Heart right ventricle (tissue), 16 donors: ENCODE measurements at regions of chr19 and their contacts with region 1.

Region 1: GRCh38 chr19:17947815-17948513 is 15.1 kb downstream of the CCDC124 start:
- DNase-seq: peak; percentile 90 to 94
- ATAC-seq: peak; percentile 84 to 93 (median 92)
- H3K4me3 ChIP-seq: peak overlapping the region; percentile 62 to 92 (median 74)
- H3K27ac ChIP-seq: peak overlapping the region in 6 of 10 donors; percentile 44 to 82 (median 61)
- H3K4me1 ChIP-seq: peaks cover 29 to 54% (median 48%) of the 10 kb centered on the region in 9 donors
- H3K27me3 ChIP-seq: peaks cover 17 to 50% (median 43%) of the 10 kb centered on the region in 7 donors
- CTCF ChIP-seq: no peak

Region 2: DNA sequence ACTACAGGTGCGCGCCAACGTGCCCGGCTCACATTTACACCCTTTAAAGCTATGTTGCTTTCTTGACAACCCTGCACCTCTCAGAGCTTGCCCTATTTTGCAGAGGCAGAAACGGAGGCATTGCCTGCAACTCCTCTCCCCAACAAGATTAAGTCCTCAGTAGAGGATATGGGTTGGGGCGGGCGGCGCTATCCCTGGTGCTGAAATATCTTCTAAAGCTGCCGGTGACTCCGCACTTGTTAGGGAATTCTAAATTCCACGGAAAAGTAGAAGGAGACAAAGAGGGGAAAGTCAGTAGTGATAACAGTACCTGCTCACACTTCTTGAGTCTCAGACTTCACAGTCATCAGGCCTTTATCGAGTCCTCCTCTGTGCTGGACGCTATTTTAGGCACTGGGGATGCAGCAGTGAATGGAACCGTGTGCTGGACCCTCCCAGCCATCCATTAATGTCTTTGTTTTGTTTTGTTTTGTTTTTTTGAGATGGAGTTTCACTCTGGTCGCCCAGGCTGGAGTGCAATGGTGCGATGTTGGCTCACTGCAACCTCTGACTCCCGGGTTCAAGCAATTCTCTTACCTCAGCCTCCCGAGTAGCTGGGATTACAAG is 58.3 kb before region 1 on chr19:
- intact Hi-C with region 1: no loop called
- DNase-seq: peak in 1 of 2 donors; percentile 13
- ATAC-seq: peak in 1 of 8 donors; percentile 47
- H3K4me3 ChIP-seq: no peak overlapping the region
- H3K27ac ChIP-seq: no peak overlapping the region
- H3K4me1 ChIP-seq: no peaks in the 10 kb centered on the region
- H3K27me3 ChIP-seq: peaks cover 0 to 46% (median 25%) of the 10 kb centered on the region in 7 donors
- CTCF ChIP-seq: no peak

Region 3: DNA sequence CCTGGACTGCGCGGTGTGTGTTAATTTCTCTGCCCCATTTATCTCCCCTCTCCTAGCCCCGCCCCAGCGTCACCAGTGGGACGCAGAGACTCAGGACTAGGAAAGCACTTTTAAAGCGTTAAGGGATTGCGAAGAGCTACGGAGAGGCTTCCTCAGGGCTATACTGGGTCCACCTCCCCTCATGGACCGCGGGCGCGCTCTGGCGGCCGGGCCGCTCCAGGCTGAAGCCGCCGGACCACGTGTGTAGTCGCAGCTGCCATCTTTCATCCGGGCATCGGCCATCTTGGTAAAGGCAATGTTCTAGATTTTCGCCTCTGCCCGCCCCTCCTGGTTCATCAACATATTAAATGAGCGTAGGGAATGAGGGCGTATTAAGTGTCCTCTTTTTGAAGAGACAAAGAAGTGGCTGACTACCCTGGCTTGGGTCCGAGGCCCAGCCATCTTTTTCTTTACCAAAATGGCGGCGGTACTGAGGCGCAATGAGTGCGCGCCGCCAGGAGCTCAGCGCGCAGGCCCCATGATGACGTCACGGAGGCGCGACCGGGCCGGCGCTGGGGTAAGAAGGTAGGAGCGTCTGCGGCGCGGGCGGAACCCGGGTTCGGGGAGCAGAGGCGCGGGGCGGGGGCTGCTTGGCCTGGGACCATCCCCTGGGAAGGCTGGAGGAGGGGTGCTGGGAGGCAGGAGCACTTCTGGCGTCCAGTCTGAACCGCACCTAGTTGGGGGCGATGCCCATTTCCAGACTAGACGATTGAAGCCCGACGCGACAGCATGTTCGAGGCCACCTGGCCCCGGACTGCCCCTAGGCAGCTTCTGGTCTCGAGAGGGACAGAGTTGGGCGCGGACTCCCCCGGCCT is 15.3 kb before region 1 on chr19 and contains the start of gene CCDC124:
- intact Hi-C with region 1: loop called in 1 of 10 experiments (anchors 1 kb)
- DNase-seq: peak; percentile 90
- ATAC-seq: peak; percentile 95 to 99 (median 97)
- H3K4me3 ChIP-seq: peak within 1 kb of the TSS; percentile 64 to 98 (median 88)
- H3K27ac ChIP-seq: peak within 1 kb of the TSS in 9 of 10 donors; percentile 74 to 98 (median 85)
- H3K4me1 ChIP-seq: peaks cover 5 to 22% (median 20%) of the 10 kb centered on the region in 9 donors
- H3K27me3 ChIP-seq: no peaks in the 10 kb centered on the region
- CTCF ChIP-seq: peak; percentile 62 to 96 (median 81)
- total RNA-seq, gene CCDC124: 52.0 to 94.2 (median 61.6) TPM

Region 4: DNA sequence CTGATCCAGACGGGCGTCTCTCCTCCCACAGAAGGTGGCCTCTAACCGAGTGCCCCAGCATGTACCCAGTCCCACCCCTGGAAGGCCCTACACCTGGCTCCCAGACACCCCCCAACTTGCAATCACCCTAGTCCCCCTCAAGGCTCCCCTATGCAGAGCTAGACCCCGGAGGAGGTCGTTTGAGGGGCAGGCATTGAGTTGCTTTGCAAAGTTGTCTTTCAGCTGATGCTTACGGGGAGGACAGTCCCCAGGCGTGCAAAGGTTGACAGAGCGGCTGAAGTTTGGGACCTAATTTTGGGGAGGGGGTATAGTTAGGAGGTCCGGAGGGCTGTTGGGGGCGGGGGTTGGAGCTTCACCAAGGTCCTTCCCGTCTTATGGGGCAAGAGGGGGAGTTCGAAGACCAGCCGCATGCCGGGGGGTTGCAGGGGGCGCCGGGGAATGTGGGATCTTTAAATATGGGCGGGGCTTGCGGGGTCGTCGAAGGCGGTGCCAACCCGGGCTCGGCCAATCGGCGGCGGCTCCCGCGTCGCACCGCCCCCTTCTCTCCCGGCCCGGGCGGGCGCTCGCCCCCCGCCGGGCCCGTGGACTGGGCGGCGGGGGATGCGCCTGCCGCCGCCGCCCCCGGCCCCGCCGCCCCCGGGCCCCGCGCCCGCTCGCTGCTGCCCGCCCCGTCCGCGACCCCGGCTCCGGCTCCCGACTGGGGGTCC is 18.7 kb after region 1 on chr19 and contains the start of gene KCNN1:
- intact Hi-C with region 1: no loop called
- DNase-seq: no peak
- ATAC-seq: peak in 2 of 8 donors; percentile 25 to 31
- H3K4me3 ChIP-seq: peak within 1 kb of the TSS in 2 of 10 donors; percentile 10 to 28
- H3K27ac ChIP-seq: no peak within 1 kb of the TSS
- H3K4me1 ChIP-seq: peaks cover 0 to 5% (median 0%) of the 10 kb centered on the region in 9 donors
- H3K27me3 ChIP-seq: peaks cover 0 to 90% (median 73%) of the 10 kb centered on the region in 7 donors
- CTCF ChIP-seq: no peak
- total RNA-seq, gene KCNN1: 0.72 TPM in 1 of 10 donors, not detected in the others

Region 5: DNA sequence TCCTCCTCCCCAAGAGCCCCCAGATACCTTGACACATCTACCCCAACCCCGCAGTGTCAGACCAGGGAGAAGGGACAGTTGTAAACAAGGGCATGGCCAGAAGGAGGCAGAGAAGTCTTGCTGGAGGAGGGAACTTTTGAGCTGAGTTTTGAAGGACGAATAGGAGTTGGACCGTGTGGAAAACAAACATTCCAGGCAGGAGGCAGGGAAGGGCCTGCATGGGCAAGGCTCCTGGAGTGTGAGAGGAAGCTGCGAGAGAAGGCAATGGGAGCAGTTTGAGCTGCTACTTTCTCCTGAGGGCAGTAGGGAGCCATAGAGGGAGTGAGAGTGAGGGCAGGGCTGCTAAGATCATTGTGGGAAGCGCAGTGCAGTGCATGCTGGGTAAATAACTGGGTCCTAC is 115.5 kb after region 1 on chr19:
- intact Hi-C with region 1: loop called in 5 of 10 experiments (anchors 5 to 10 kb)
- DNase-seq: no peak
- ATAC-seq: no peak
- H3K4me3 ChIP-seq: no peak overlapping the region
- H3K27ac ChIP-seq: no peak overlapping the region
- H3K4me1 ChIP-seq: peaks cover 0 to 4% (median 3%) of the 10 kb centered on the region in 9 donors
- H3K27me3 ChIP-seq: peaks cover 0 to 8% (median 0%) of the 10 kb centered on the region in 7 donors
- CTCF ChIP-seq: no peak